ENCODE measurements at regions of chr21 and their contacts with region 1.

Region 1: GRCh38 chr21:30408782-30409494 is 13.1 kb downstream of the KRTAP13-1 start:
- DNase-seq: peak; percentile 84
- ATAC-seq: peak; percentile 100
- H3K4me3 Mint-ChIP-seq: peak overlapping the region; percentile 51
- H3K27ac Mint-ChIP-seq: peak overlapping the region; percentile 92
- H3K4me1 Mint-ChIP-seq: peaks cover 4% of the 10 kb centered on the region
- H3K27me3 Mint-ChIP-seq: no peaks in the 10 kb centered on the region; the same call in 1 of the 2 replicates
- CTCF ChIP-seq: no peak; the same call in 1 of the 2 replicates

Region 2: DNA sequence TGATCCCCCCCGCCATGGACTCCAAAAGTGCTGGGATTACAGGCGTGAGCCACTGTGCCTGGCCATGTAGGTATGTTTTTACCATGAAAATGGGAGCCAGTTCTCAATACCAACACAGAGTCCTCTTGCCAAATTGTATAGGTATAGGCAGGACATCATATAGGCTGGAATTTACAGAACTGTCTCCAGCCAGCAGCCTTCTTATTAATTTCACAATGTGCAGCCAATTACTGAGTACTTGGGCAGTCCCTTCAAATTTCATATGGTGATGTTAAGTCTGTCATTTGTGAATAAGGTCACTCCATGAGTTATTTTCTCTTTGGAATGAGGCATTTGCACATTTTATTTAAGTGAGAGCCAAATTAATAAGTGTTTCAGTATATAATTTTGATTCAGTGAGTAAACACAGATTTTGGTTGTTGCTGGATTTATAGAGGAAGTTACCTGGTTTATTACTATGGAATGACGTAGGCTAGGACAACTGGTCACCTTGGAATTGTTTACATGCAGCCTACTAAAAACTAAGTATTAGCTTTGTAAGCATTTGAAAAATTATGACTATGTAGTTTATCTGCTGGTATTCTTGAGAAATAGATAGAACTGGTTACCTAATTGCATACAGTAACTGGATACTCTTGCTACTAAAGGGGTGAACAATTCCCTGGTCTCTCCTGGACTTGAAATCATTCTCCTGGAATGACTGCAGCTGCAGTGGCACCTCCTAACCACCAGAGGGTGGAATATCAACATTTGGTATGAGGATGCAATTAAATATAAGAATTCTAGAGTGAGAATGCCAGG is 68.3 kb before region 1 on chr21:
- CTCF ChIA-PET with region 1: interaction called, 12 read pairs
- POLR2A ChIA-PET with region 1: no interaction called
- DNase-seq: peak; percentile 58
- ATAC-seq: peak; percentile 70
- H3K4me3 Mint-ChIP-seq: no peak overlapping the region
- H3K27ac Mint-ChIP-seq: no peak overlapping the region
- H3K4me1 Mint-ChIP-seq: no peaks in the 10 kb centered on the region
- H3K27me3 Mint-ChIP-seq: no peaks in the 10 kb centered on the region
- CTCF ChIP-seq: peak; percentile 82

Region 3: GRCh38 chr21:30426731-30427130 is 17.8 kb after region 1 on chr21:
- CTCF ChIA-PET with region 1: interaction called, 10 read pairs
- POLR2A ChIA-PET with region 1: no interaction called
- DNase-seq: peak; percentile 25
- ATAC-seq: peak; percentile 97
- H3K4me3 Mint-ChIP-seq: no peak overlapping the region
- H3K27ac Mint-ChIP-seq: peak overlapping the region; percentile 81
- H3K4me1 Mint-ChIP-seq: peaks cover 51% of the 10 kb centered on the region
- H3K27me3 Mint-ChIP-seq: no peaks in the 10 kb centered on the region; the same call in 1 of the 2 replicates
- CTCF ChIP-seq: no peak

Region 4: GRCh38 chr21:30434033-30434631 is 25.2 kb after region 1 on chr21:
- CTCF ChIA-PET with region 1: interaction called, 29 read pairs
- POLR2A ChIA-PET with region 1: interaction called, 3 read pairs
- DNase-seq: peak; percentile 64
- ATAC-seq: peak; percentile 98
- H3K4me3 Mint-ChIP-seq: no peak overlapping the region
- H3K27ac Mint-ChIP-seq: no peak overlapping the region
- H3K4me1 Mint-ChIP-seq: peaks cover 14% of the 10 kb centered on the region
- H3K27me3 Mint-ChIP-seq: no peaks in the 10 kb centered on the region
- CTCF ChIP-seq: peak; percentile 36; the same call in 1 of the 2 replicates

Region 5: GRCh38 chr21:30463713-30464112 is 54.8 kb after region 1 on chr21:
- CTCF ChIA-PET with region 1: interaction called, 12 read pairs
- POLR2A ChIA-PET with region 1: no interaction called
- DNase-seq: no peak
- ATAC-seq: peak; percentile 38; the same call in 1 of the 2 replicates
- H3K4me3 Mint-ChIP-seq: no peak overlapping the region
- H3K27ac Mint-ChIP-seq: no peak overlapping the region
- H3K4me1 Mint-ChIP-seq: no peaks in the 10 kb centered on the region
- H3K27me3 Mint-ChIP-seq: no peaks in the 10 kb centered on the region
- CTCF ChIP-seq: peak; percentile 66